ENCODE measurements at regions of chr21 and their contacts with region 1.

Region 1: GRCh38 chr21:33641336-33642026 is at the start of gene CRYZL1:
- DNase-seq: peak; percentile 100
- H3K4me3 Mint-ChIP-seq: peak within 1 kb of the TSS; percentile 88
- H3K27ac Mint-ChIP-seq: peak within 1 kb of the TSS; percentile 94
- H3K4me1 Mint-ChIP-seq: peaks cover 20% of the 10 kb centered on the region
- H3K27me3 Mint-ChIP-seq: peaks cover 27% of the 10 kb centered on the region
- total RNA-seq, gene CRYZL1: 26.3 and 34.8 TPM in 2 replicates

Region 2: GRCh38 chr21:32727687-32728455 is 913.6 kb before region 1 on chr21 and contains the start of gene SYNJ1:
- intact Hi-C with region 1: loop called (anchors 2 kb)
- DNase-seq: peak; percentile 98
- H3K4me3 Mint-ChIP-seq: peak within 1 kb of the TSS; percentile 90
- H3K27ac Mint-ChIP-seq: peak within 1 kb of the TSS; percentile 93
- H3K4me1 Mint-ChIP-seq: peaks cover 30% of the 10 kb centered on the region
- H3K27me3 Mint-ChIP-seq: no peaks in the 10 kb centered on the region
- total RNA-seq, gene SYNJ1: 11.3 and 12.6 TPM in 2 replicates

Region 3: DNA sequence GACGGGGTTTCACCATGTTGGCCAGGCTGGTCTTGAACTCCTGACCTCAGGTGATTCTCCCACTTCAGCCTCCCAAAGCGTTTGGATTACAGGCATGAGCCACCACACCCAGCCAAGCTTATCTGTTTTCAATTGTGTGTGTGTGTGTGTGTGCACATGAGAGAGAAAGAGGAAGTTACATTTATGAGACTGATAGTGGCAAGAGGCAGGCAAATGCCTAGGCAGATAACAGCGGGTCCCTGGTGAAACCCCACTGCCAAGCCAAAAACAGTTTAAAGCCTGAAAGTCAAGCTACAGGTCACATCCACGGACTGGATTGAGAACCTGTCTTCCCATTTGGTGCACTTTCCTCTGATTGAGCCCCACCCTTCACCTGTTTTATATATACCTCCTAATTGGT is 273.4 kb before region 1 on chr21:
- intact Hi-C with region 1: no loop called
- DNase-seq: no peak
- H3K4me3 Mint-ChIP-seq: no peak overlapping the region
- H3K27ac Mint-ChIP-seq: no peak overlapping the region
- H3K4me1 Mint-ChIP-seq: peaks cover 2% of the 10 kb centered on the region
- H3K27me3 Mint-ChIP-seq: peaks cover 2% of the 10 kb centered on the region

Region 4: GRCh38 chr21:33491373-33492102 is 149.9 kb before region 1 on chr21 and contains the start of gene DNAJC28:
- intact Hi-C with region 1: loop called (anchors 1 kb)
- DNase-seq: peak; percentile 98
- H3K4me3 Mint-ChIP-seq: peak within 1 kb of the TSS; percentile 84
- H3K27ac Mint-ChIP-seq: peak within 1 kb of the TSS; percentile 72
- H3K4me1 Mint-ChIP-seq: peaks cover 10% of the 10 kb centered on the region
- H3K27me3 Mint-ChIP-seq: peaks cover 18% of the 10 kb centered on the region
- total RNA-seq, gene DNAJC28: 0.09 and 0.12 TPM in 2 replicates

Region 5: GRCh38 chr21:33588485-33589335 is 52.8 kb before region 1 on chr21 and contains the start of gene DONSON:
- intact Hi-C with region 1: loop called (anchors 1 kb)
- DNase-seq: peak; percentile 98
- H3K4me3 Mint-ChIP-seq: peak within 1 kb of the TSS; percentile 96
- H3K27ac Mint-ChIP-seq: peak within 1 kb of the TSS; percentile 87
- H3K4me1 Mint-ChIP-seq: peaks cover 18% of the 10 kb centered on the region
- H3K27me3 Mint-ChIP-seq: no peaks in the 10 kb centered on the region
- total RNA-seq, gene DONSON: 42.6 and 42.7 TPM in 2 replicates

Region 6: GRCh38 chr21:33619726-33620125 is 21.8 kb before region 1 on chr21:
- intact Hi-C with region 1: no loop called
- DNase-seq: no peak
- H3K4me3 Mint-ChIP-seq: no peak overlapping the region
- H3K27ac Mint-ChIP-seq: no peak overlapping the region
- H3K4me1 Mint-ChIP-seq: no peaks in the 10 kb centered on the region
- H3K27me3 Mint-ChIP-seq: no peaks in the 10 kb centered on the region

Region 7: GRCh38 chr21:34614633-34615486 is 973.4 kb after region 1 on chr21 and contains the start of gene RCAN1:
- intact Hi-C with region 1: loop called (anchors 2 kb)
- DNase-seq: peak; percentile 96
- H3K4me3 Mint-ChIP-seq: peak within 1 kb of the TSS; percentile 91
- H3K27ac Mint-ChIP-seq: peak within 1 kb of the TSS; percentile 80
- H3K4me1 Mint-ChIP-seq: peaks cover 19% of the 10 kb centered on the region
- H3K27me3 Mint-ChIP-seq: peaks cover 23% of the 10 kb centered on the region
- total RNA-seq, gene RCAN1: 15.7 and 17.6 TPM in 2 replicates

Measured in activated CD4-positive, alpha-beta T cell treated with anti-CD3 and anti-CD28 coated beads, Interleukin-2, amount 10 ng/mL, durations not matched to agents 24 days and 14 days (primary cell).